ENCODE measurements at regions of chr10 and their contacts with region 1.

Region 1: DNA sequence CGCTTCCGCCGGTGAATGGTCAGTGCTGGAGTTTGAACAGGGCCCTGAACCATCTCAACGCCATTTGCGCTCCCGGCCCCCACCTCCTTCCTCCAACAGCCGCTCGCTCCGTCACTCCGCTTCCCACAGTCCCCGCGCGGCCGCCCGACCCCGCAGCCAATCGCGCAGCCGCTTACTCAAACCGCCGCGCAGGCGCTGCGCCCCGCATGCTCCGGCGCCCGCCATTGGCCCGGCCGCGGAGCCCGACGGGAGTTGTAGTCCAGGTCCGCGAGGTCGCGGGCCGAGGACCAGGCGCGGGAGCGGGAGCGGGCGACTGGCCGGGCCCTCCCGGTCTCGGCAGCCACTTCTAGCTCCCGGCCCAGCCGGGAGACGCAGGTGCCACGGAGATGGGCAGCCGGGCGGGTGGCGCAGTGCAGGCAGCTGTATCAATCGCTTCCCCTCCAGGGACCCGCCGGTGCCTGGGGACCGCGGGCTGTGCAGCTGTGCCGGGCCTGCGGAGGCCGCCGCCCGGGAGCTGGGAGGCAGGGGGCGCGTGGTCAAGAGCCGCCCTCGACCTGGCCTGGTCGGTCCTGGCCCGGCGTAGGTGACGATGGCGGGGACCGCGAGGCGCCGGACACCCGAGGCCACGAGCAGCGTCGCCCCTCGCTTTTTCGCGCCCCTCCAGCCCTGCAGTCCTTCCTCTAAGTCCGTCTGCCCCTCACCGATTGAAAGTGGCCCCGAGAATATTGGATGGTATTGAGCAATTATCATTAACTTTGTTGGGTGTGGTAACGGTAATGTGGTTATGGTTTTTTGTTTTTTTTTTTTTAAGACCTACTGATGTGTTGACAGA is at the start of gene WAPL:
- DNase-seq: peak; percentile 59
- ATAC-seq: peak; percentile 96
- H3K4me3 ChIP-seq: peak within 1 kb of the TSS; percentile 83
- H3K27ac ChIP-seq: peak within 1 kb of the TSS; percentile 76
- H3K4me1 ChIP-seq: peaks cover 13% of the 10 kb centered on the region
- H3K27me3 ChIP-seq: no peaks in the 10 kb centered on the region
- CTCF ChIP-seq: no peak
- EP300 ChIP-seq: no peak
- POLR2A ChIP-seq: peak; percentile 80
- RAD21 ChIP-seq: no peak
- polyA plus RNA-seq, gene WAPL: 15.7 to 18.5 TPM

Region 2: GRCh38 chr10:86389441-86390193 is 132.3 kb before region 1 on chr10:
- CTCF ChIA-PET with region 1: interaction called, 4 read pairs
- POLR2A ChIA-PET with region 1: interaction called, 3 read pairs
- RAD21 ChIA-PET with region 1: interaction called, 4 read pairs
- SMC1A ChIA-PET with region 1: interaction called, 3 read pairs
- in situ Hi-C with region 1: no loop called
- intact Hi-C with region 1: loop called (anchors 5 kb)
- DNase-seq: no peak
- ATAC-seq: peak; percentile 85
- H3K4me3 ChIP-seq: peak overlapping the region; percentile 87
- H3K27ac ChIP-seq: peak overlapping the region; percentile 91
- H3K4me1 ChIP-seq: peaks cover 36% of the 10 kb centered on the region
- H3K27me3 ChIP-seq: no peaks in the 10 kb centered on the region
- CTCF ChIP-seq: peak; percentile 21 to 40 (median 21); a peak in 3 of 6 replicates
- EP300 ChIP-seq: no peak
- POLR2A ChIP-seq: peak; percentile 71
- RAD21 ChIP-seq: no peak

Region 3: GRCh38 chr10:86411281-86411841 is 110.5 kb before region 1 on chr10:
- CTCF ChIA-PET with region 1: no interaction called
- POLR2A ChIA-PET with region 1: interaction called, 9 read pairs
- RAD21 ChIA-PET with region 1: no interaction called
- SMC1A ChIA-PET with region 1: interaction called, 5 read pairs
- in situ Hi-C with region 1: no loop called
- intact Hi-C with region 1: loop called (anchors 5 kb)
- DNase-seq: peak; percentile 74
- ATAC-seq: peak; percentile 74
- H3K4me3 ChIP-seq: peak overlapping the region; percentile 38; the same call in 1 of the 2 replicates
- H3K27ac ChIP-seq: peak overlapping the region; percentile 82
- H3K4me1 ChIP-seq: peaks cover 38% of the 10 kb centered on the region
- H3K27me3 ChIP-seq: no peaks in the 10 kb centered on the region
- CTCF ChIP-seq: no peak
- EP300 ChIP-seq: peak in 1 of 2 experiments; percentile 66; a peak in 1 of 4 replicates
- POLR2A ChIP-seq: peak; percentile 68
- RAD21 ChIP-seq: no peak

Region 4: DNA sequence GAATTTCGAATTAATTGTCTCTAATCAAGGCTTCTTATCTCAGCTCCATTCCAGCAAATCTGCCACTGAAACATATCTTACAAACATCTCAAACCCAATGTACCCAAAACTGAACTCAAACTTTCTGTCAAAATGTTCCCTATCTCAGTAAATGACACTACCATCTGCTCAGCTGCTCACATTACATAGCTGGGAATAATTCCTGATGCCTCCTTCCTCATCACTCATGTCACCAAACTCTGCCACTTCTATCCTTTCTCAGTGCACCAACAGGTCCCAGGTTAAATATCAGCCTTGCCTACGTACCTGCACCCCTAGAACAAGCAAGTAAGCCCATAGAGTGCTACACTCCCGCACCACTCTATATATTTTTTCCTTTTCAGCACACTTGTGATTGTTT is 12.7 kb before region 1 on chr10:
- CTCF ChIA-PET with region 1: interaction called, 4 read pairs
- POLR2A ChIA-PET with region 1: interaction called, 3 read pairs
- RAD21 ChIA-PET with region 1: interaction called, 3 read pairs
- SMC1A ChIA-PET with region 1: interaction called, 10 read pairs
- in situ Hi-C with region 1: no loop called
- intact Hi-C with region 1: no loop called
- DNase-seq: no peak
- ATAC-seq: no peak
- H3K4me3 ChIP-seq: no peak overlapping the region
- H3K27ac ChIP-seq: no peak overlapping the region
- H3K4me1 ChIP-seq: peaks cover 6% of the 10 kb centered on the region
- H3K27me3 ChIP-seq: no peaks in the 10 kb centered on the region
- CTCF ChIP-seq: no peak
- EP300 ChIP-seq: no peak
- POLR2A ChIP-seq: no peak
- RAD21 ChIP-seq: no peak

Region 5: GRCh38 chr10:86585037-86585725 is 63.3 kb after region 1 on chr10:
- CTCF ChIA-PET with region 1: interaction called, 6 read pairs
- POLR2A ChIA-PET with region 1: no interaction called
- RAD21 ChIA-PET with region 1: interaction called, 4 read pairs
- SMC1A ChIA-PET with region 1: interaction called, 4 read pairs
- in situ Hi-C with region 1: no loop called
- intact Hi-C with region 1: loop called (anchors 5 kb)
- DNase-seq: peak; percentile 38
- ATAC-seq: peak; percentile 99
- H3K4me3 ChIP-seq: no peak overlapping the region
- H3K27ac ChIP-seq: no peak overlapping the region
- H3K4me1 ChIP-seq: no peaks in the 10 kb centered on the region
- H3K27me3 ChIP-seq: no peaks in the 10 kb centered on the region
- CTCF ChIP-seq: peak; percentile 92 to 96 (median 94)
- EP300 ChIP-seq: no peak
- POLR2A ChIP-seq: no peak
- RAD21 ChIP-seq: peak; percentile 98

Measured in GM12878 (cell line).